ENCODE measurements at regions of chr2 and their contacts with region 1.

Region 1: GRCh38 chr2:209334198-209335017 is 89.4 kb upstream of the MAP2 start:
- DNase-seq: peak; percentile 60
- ATAC-seq: peak; percentile 96
- H3K4me3 ChIP-seq: peak overlapping the region in 1 of 2 experiments; percentile 27; a peak in 2 of 4 replicates
- H3K27ac ChIP-seq: no peak overlapping the region
- H3K4me1 ChIP-seq: peaks cover 0 to 4% of the 10 kb centered on the region in 2 experiments; a peak in 2 of 4 replicates
- H3K27me3 ChIP-seq: no peaks in the 10 kb centered on the region
- CTCF ChIP-seq: peak; percentile 77 to 97 (median 90)
- POLR2A ChIP-seq: no peak
- RAD21 ChIP-seq: peak; percentile 98

Region 2: GRCh38 chr2:208392300-208393080 is 941.9 kb before region 1 on chr2:
- CTCF ChIA-PET with region 1: interaction called, 13 read pairs
- POLR2A ChIA-PET with region 1: no interaction called
- RAD21 ChIA-PET with region 1: interaction called, 3 to 7 read pairs
- intact Hi-C with region 1: loop called (anchors 1 kb)
- DNase-seq: no peak
- ATAC-seq: peak; percentile 59
- H3K4me3 ChIP-seq: no peak overlapping the region
- H3K27ac ChIP-seq: no peak overlapping the region
- H3K4me1 ChIP-seq: no peaks in the 10 kb centered on the region
- H3K27me3 ChIP-seq: no peaks in the 10 kb centered on the region
- CTCF ChIP-seq: peak in 2 of 3 experiments; percentile 39; a peak in 3 of 6 replicates
- POLR2A ChIP-seq: no peak
- RAD21 ChIP-seq: peak; percentile 19; the same call in 1 of the 2 replicates

Region 3: DNA sequence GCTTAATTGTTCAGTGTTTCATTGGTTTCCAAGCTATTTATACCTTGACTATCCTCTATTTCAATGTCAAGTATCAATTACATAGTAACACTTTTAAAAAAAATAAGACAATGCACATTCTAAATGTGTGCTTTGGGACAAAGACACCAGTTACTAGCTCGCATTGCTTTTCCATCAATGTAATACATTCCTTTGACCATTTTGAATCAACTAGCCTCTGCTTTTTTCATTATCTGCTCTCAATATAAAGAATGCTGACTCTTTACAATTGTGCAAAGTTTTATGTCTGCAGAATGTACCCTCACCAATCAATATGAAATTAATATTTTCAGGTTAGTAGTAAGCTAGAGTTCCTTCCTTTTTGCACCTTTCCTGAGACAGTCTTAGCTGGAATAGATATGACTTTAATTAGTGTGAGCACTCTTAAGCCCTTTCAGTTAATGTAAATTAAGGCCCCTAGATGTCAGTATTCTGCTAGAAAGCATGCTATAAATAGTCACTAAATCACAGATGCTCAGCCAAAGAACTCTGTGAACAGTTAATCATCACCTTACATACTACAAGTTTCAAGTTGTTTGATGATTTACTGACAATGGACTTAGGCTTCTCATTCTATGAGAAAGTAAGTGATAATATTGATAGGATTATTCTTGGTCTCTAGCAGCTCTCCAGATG is 514.3 kb before region 1 on chr2:
- CTCF ChIA-PET with region 1: interaction called, 10 read pairs
- POLR2A ChIA-PET with region 1: no interaction called
- RAD21 ChIA-PET with region 1: no interaction called
- intact Hi-C with region 1: no loop called
- DNase-seq: peak; percentile 4
- ATAC-seq: peak; percentile 69
- H3K4me3 ChIP-seq: no peak overlapping the region
- H3K27ac ChIP-seq: no peak overlapping the region
- H3K4me1 ChIP-seq: no peaks in the 10 kb centered on the region
- H3K27me3 ChIP-seq: 0 out of 2 replicates have a peak, but pooled peaks cover 3% of the 10 kb centered on the region
- CTCF ChIP-seq: peak; percentile 32 to 50 (median 37); a peak in 3 of 6 replicates
- POLR2A ChIP-seq: no peak
- RAD21 ChIP-seq: peak; percentile 58

Region 4: DNA sequence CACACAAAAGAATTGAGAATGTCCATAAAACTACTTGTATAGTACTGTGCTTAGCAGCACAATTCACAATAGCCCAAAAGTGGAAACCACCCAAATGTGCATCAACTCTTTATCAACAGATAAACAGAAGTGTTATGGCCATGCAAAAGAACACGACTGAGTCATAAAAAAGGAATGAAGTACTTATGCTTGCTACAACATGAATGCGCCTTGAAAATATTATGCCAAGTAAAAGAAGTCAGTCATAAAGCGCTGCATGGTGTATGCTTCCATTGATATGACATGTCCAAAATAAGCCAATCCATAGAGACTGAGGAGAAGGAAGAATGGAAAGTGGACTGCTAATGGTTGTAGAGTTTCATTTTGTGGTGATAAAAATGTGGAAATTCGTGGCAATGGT is 77.3 kb after region 1 on chr2:
- CTCF ChIA-PET with region 1: no interaction called
- POLR2A ChIA-PET with region 1: no interaction called
- RAD21 ChIA-PET with region 1: no interaction called
- intact Hi-C with region 1: no loop called
- DNase-seq: no peak
- ATAC-seq: no peak
- H3K4me3 ChIP-seq: no peak overlapping the region
- H3K27ac ChIP-seq: no peak overlapping the region
- H3K4me1 ChIP-seq: no peaks in the 10 kb centered on the region
- H3K27me3 ChIP-seq: no peaks in the 10 kb centered on the region
- CTCF ChIP-seq: no peak
- POLR2A ChIP-seq: no peak
- RAD21 ChIP-seq: no peak

Region 5: DNA sequence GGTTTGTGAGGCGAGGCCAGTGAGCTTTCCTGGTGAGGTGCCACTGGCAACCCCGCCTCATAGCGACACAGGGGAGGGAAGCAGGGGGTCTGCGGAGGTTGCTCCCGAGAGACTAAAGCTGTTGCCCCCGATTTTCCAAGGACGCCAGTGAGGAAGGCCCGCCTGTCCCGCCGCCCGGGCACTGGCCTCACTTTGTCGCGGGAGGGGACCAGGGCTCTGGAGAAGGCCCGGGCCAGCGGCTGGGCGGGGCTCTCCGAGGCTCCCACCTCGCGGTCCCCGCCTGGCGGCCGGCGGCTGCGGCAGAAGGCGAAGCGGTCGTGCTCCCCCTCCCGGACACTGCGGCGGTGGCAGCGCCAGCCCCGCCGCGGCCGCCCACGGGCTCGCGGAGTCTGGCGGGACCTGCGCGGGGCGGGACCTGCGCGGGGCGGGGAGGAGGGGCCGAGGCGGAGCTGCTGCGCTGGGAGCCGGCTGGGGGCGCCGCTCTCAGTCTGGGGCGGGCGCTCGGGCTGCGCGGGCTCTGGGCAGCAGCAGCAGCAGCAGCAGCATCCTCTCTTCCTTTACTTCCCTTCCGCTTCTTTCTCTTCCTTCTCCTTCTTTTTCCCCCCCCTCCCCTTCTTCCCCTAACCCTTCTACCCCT is 89.3 kb after region 1 on chr2 and contains the start of gene MAP2:
- CTCF ChIA-PET with region 1: interaction called, 83 read pairs
- POLR2A ChIA-PET with region 1: no interaction called
- RAD21 ChIA-PET with region 1: interaction called in 1 of 2 experiments, 5 read pairs
- intact Hi-C with region 1: loop called (anchors 1 kb)
- DNase-seq: peak; percentile 66
- ATAC-seq: peak; percentile 95
- H3K4me3 ChIP-seq: peak within 1 kb of the TSS; percentile 71 to 81
- H3K27ac ChIP-seq: peak within 1 kb of the TSS; percentile 2; the same call in 1 of the 2 replicates
- H3K4me1 ChIP-seq: peaks cover 10 to 26% of the 10 kb centered on the region in 2 experiments; a peak in 3 of 4 replicates
- H3K27me3 ChIP-seq: no peaks in the 10 kb centered on the region
- CTCF ChIP-seq: peak; percentile 66 to 98 (median 77)
- POLR2A ChIP-seq: peak; percentile 32
- RAD21 ChIP-seq: peak; percentile 62
- total RNA-seq, gene MAP2: 7.4 TPM

Region 6: DNA sequence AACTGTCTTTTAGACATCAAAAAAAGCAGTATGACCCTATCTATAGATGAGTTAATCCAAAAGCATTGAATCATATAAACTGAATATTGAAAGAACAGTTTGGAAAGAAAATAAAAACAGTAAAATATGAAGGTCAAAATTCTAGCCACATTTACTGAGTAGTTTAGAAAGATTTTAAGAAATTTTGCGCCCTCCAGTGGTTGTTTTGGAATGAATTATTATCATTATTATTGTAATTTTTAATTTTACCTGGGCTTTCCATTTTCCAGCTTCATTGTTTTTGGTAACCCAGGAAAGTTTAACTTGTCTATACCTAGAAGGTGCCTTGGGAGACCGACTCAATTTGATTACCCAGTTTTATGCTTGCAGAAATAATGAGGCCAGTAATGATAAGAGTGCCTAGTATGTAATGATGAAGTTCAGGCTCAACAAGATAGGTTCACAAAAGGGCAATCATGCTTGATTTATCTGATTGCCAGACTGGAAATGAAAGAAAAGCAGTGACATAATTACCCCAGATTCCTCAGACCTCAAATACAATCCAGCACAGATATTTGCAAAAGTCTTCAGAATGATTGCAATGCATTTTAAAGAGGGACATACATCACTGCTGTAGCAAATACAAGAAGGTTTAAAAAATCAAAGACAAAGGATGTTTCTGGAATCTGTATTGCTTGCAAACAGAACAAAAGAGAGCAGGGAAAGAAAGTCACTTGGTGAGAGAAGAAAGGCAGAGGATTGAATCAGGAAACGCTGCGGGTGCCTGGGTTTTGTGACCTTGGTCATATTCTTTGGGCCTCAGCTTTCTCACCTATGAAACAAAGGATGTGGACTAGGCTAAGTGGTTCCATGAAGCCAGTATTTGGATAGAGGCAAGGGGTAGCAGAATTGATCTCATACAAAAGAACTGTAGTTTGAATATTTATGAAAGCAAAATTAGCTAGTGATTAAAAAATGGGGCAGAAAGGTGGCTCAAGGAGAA is 243.3 kb after region 1 on chr2:
- CTCF ChIA-PET with region 1: interaction called, 43 read pairs
- POLR2A ChIA-PET with region 1: no interaction called
- RAD21 ChIA-PET with region 1: interaction called in 1 of 2 experiments, 3 read pairs
- intact Hi-C with region 1: loop called (anchors 1 kb)
- DNase-seq: peak; percentile 6
- ATAC-seq: no peak
- H3K4me3 ChIP-seq: no peak overlapping the region
- H3K27ac ChIP-seq: no peak overlapping the region
- H3K4me1 ChIP-seq: no peaks in the 10 kb centered on the region
- H3K27me3 ChIP-seq: no peaks in the 10 kb centered on the region
- CTCF ChIP-seq: peak in 2 of 3 experiments; percentile 51 to 60; a peak in 3 of 6 replicates
- POLR2A ChIP-seq: no peak
- RAD21 ChIP-seq: peak; percentile 59

Region 7: GRCh38 chr2:210195101-210195852 is 860.9 kb after region 1 on chr2:
- CTCF ChIA-PET with region 1: interaction called, 4 read pairs
- POLR2A ChIA-PET with region 1: no interaction called
- RAD21 ChIA-PET with region 1: no interaction called
- intact Hi-C with region 1: loop called (anchors 5 kb)
- DNase-seq: peak; percentile 38
- ATAC-seq: peak; percentile 77
- H3K4me3 ChIP-seq: peak overlapping the region; percentile 37 to 50
- H3K27ac ChIP-seq: no peak overlapping the region
- H3K4me1 ChIP-seq: peaks cover 0 to 5% of the 10 kb centered on the region in 2 experiments; a peak in 1 of 4 replicates
- H3K27me3 ChIP-seq: no peaks in the 10 kb centered on the region
- CTCF ChIP-seq: peak; percentile 48 to 85 (median 75); a peak in 5 of 6 replicates
- POLR2A ChIP-seq: no peak
- RAD21 ChIP-seq: peak; percentile 86

Measured in HCT116 (cell line).